K562 (cell line): ENCODE measurements at regions of chr5 and their contacts with region 1.

Region 1: DNA sequence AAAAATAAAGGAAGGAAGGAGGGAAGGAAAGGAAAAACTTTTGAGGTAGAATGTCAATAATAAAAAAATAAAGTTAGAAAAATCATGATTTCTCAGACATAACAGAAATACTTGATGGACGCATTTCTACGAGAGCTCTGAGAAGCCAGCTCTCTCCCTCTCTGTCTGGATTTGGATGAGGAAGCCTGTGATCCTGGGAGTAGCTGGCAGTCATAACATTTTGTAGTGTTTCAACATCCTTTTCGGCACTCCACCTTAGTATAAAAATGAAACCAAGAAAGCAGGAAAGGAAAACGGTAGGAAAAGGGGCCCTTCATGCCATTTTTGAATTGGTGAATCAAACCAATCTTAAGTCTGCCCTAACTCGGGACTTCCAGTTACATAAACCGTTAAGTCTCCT is 321.3 kb downstream of the EPB41L4A start:
- DNase-seq: no peak
- ATAC-seq: no peak
- H3K4me3 ChIP-seq: no peak overlapping the region
- H3K27ac ChIP-seq: no peak overlapping the region
- H3K4me1 ChIP-seq: no peaks in the 10 kb centered on the region
- H3K27me3 ChIP-seq: no peaks in the 10 kb centered on the region
- CTCF ChIP-seq: no peak
- EP300 ChIP-seq: no peak
- POLR2A ChIP-seq: no peak
- RAD21 ChIP-seq: no peak

Region 2: DNA sequence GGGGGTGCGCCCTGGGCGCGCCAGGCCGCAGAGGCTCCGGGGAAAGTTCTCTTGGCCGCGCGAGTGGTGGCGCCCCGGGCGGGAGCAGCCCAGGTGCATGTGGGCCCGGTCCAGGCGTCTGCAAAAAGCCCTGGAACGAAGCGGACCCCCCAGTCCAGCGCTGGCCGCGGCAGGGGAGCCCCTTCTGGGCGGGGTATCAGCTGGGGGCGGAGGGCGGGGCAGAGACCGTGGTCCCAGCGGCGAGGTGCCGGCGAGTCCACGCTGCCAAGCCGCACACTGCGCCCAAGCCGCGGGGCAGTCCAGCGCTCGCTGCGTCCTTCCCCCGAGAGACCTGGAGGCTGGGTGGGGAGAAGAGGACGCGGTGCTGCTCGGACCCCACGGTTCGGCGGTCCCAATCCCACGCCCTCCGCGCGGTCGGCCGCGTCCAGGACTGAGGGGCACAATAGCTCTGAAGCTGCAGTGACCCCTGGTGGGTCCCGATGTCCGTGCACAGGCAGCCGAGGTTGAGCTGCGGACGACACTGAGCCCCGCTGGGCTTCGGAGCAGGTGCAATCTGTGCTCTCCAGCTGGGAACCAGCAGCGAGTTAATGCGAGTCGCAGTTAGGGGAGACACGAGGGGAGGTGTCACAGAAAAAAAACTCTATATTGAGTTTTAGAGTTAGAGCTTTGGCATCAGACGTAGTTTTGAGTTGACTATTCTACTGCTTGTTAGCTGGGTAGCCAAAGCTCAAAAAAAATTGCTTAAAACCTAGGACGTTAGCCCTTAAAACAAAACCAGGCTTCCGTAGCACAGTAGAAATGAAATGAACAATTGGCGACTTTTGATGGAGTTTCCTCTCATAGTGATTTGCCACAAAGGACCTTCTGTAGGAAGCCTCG is 322.5 kb after region 1 on chr5:
- CTCF ChIA-PET with region 1: no interaction called
- POLR2A ChIA-PET with region 1: no interaction called
- in situ Hi-C with region 1: no loop called
- intact Hi-C with region 1: no loop called
- DNase-seq: peak; percentile 61 to 78 (median 72)
- ATAC-seq: peak; percentile 100
- H3K4me3 ChIP-seq: peak overlapping the region; percentile 42
- H3K27ac ChIP-seq: no peak overlapping the region
- H3K4me1 ChIP-seq: peaks cover 0 to 20% of the 10 kb centered on the region in 2 experiments; a peak in 3 of 5 replicates
- H3K27me3 ChIP-seq: peaks cover 4 to 33% of the 10 kb centered on the region in 2 experiments; a peak in 4 of 5 replicates
- CTCF ChIP-seq: peak; percentile 80 to 95 (median 84)
- EP300 ChIP-seq: no peak
- POLR2A ChIP-seq: no peak
- RAD21 ChIP-seq: peak; percentile 80 to 81

Region 3: DNA sequence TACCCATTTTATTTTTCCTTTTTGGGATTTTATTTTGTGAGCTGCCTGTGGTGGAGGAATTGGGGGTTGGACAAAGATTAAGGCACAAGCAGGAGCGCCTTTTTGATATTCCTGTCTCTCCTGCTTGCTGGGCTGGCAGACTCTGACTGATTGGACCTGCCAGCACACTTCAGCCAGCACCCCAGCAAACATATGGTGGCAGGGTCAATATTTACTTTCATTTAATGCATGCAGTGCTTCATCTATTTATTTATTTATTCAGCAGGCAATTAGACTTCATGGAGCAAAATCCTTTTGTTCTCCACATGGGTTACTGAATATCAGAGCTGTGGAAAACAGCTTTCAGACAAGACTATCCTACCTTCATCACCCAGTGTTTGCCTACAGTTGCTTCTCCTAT is 369.7 kb after region 1 on chr5:
- CTCF ChIA-PET with region 1: no interaction called
- POLR2A ChIA-PET with region 1: no interaction called
- in situ Hi-C with region 1: no loop called
- intact Hi-C with region 1: loop called (anchors 5 kb)
- DNase-seq: no peak
- ATAC-seq: no peak
- H3K4me3 ChIP-seq: no peak overlapping the region
- H3K27ac ChIP-seq: no peak overlapping the region
- H3K4me1 ChIP-seq: no peaks in the 10 kb centered on the region; a peak in 1 of 5 replicates
- H3K27me3 ChIP-seq: peaks cover 0 to 4% of the 10 kb centered on the region in 2 experiments; a peak in 1 of 5 replicates
- CTCF ChIP-seq: no peak
- EP300 ChIP-seq: no peak
- POLR2A ChIP-seq: no peak
- RAD21 ChIP-seq: no peak